AG04449 (cell line): ENCODE measurements at regions of chr3 and their contacts with region 1.

Region 1: GRCh38 chr3:73419179-73419803 is 205.4 kb downstream of the PDZRN3 start:
- DNase-seq: no peak
- H3K4me3 ChIP-seq: no peak overlapping the region
- CTCF ChIP-seq: peak; percentile 2

Region 2: GRCh38 chr3:73086071-73086494 is 333.2 kb before region 1 on chr3:
- CTCF ChIA-PET with region 1: no interaction called
- POLR2A ChIA-PET with region 1: no interaction called
- DNase-seq: no peak
- H3K4me3 ChIP-seq: no peak overlapping the region
- CTCF ChIP-seq: peak; percentile 63

Region 3: GRCh38 chr3:73405853-73406252 is 13.4 kb before region 1 on chr3:
- CTCF ChIA-PET with region 1: no interaction called
- POLR2A ChIA-PET with region 1: no interaction called
- DNase-seq: no peak
- H3K4me3 ChIP-seq: no peak overlapping the region
- CTCF ChIP-seq: no peak

Region 4: GRCh38 chr3:73432023-73432705 is 12.9 kb after region 1 on chr3:
- CTCF ChIA-PET with region 1: interaction called, 59 read pairs
- POLR2A ChIA-PET with region 1: no interaction called
- DNase-seq: no peak
- H3K4me3 ChIP-seq: no peak overlapping the region
- CTCF ChIP-seq: peak; percentile 55